ENCODE measurements at regions of chr10 and their contacts with region 1.

Region 1: DNA sequence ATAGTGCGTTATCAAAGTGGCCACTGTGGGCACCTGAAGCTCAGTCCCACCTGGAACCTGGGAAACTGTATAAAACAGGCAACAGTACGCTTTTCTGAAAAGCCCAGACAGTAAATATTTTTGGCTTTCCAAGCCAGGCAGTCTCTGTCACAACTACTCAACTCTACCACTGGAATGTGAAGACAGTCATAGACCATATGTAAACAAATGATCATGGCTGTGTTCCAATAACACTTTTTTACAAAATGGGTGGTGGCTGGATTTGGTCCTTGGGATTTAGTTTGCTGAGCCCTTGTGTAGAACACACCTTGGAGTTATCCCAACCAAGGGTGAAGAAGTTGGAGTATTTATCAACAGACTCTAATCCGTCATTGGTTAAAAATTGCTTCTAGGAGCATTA is 259.9 kb downstream of the SKIDA1 start:
- DNase-seq: no peak
- H3K4me3 ChIP-seq: no peak overlapping the region
- H3K27ac ChIP-seq: no peak overlapping the region
- H3K4me1 ChIP-seq: no peaks in the 10 kb centered on the region
- H3K27me3 ChIP-seq: no peaks in the 10 kb centered on the region
- CTCF ChIP-seq: no peak
- EP300 ChIP-seq: no peak
- POLR2A ChIP-seq: no peak

Region 2: GRCh38 chr10:21078410-21079329 is 187.0 kb before region 1 on chr10:
- intact Hi-C with region 1: loop called (anchors 5 kb)
- DNase-seq: peak; percentile 64 to 90
- H3K4me3 ChIP-seq: no peak overlapping the region
- H3K27ac ChIP-seq: no peak overlapping the region
- H3K4me1 ChIP-seq: peaks cover 0 to 7% (median 2%) of the 10 kb centered on the region in 4 donors
- H3K27me3 ChIP-seq: no peaks in the 10 kb centered on the region
- CTCF ChIP-seq: peak in 5 of 7 experiments; percentile 46 to 71 (median 63)
- EP300 ChIP-seq: no peak
- POLR2A ChIP-seq: no peak

Region 3: GRCh38 chr10:21230219-21230618 is 35.4 kb before region 1 on chr10:
- intact Hi-C with region 1: no loop called
- DNase-seq: no peak
- H3K4me3 ChIP-seq: no peak overlapping the region
- H3K27ac ChIP-seq: no peak overlapping the region
- H3K4me1 ChIP-seq: no peaks in the 10 kb centered on the region
- H3K27me3 ChIP-seq: no peaks in the 10 kb centered on the region
- CTCF ChIP-seq: no peak
- EP300 ChIP-seq: no peak
- POLR2A ChIP-seq: no peak

Measured in stomach (tissue), 19 donors.